Gastrocnemius medialis (tissue), 4 donors: ENCODE measurements at regions of chr5 and their contacts with region 1.

Region 1: GRCh38 chr5:39424736-39425637 is at the start of gene DAB2:
- DNase-seq: peak; percentile 59 to 76
- ATAC-seq: peak; percentile 64 to 77
- H3K4me3 ChIP-seq: peak within 1 kb of the TSS; percentile 52 to 71 (median 64)
- H3K27ac ChIP-seq: peak within 1 kb of the TSS; percentile 75 to 83 (median 82)
- H3K4me1 ChIP-seq: peaks cover 32 to 38% of the 10 kb centered on the region in 2 donors
- H3K27me3 ChIP-seq: peaks cover 0 to 14% (median 3%) of the 10 kb centered on the region in 3 donors
- CTCF ChIP-seq: peak; percentile 5 to 51 (median 34)
- POLR2A ChIP-seq: peak; percentile 50 to 74
- total RNA-seq, gene DAB2: 7.2 to 18.5 (median 16.3) TPM

Region 2: GRCh38 chr5:39256477-39257235 is 168.3 kb before region 1 on chr5:
- in situ Hi-C with region 1: no loop called
- intact Hi-C with region 1: no loop called
- DNase-seq: no peak
- ATAC-seq: no peak
- H3K4me3 ChIP-seq: no peak overlapping the region
- H3K27ac ChIP-seq: no peak overlapping the region
- H3K4me1 ChIP-seq: no peaks in the 10 kb centered on the region
- H3K27me3 ChIP-seq: no peaks in the 10 kb centered on the region
- CTCF ChIP-seq: no peak
- POLR2A ChIP-seq: no peak

Region 3: GRCh38 chr5:39379693-39380092 is 45.3 kb before region 1 on chr5:
- in situ Hi-C with region 1: no loop called
- intact Hi-C with region 1: no loop called
- DNase-seq: no peak
- ATAC-seq: no peak
- H3K4me3 ChIP-seq: no peak overlapping the region
- H3K27ac ChIP-seq: no peak overlapping the region
- H3K4me1 ChIP-seq: no peaks in the 10 kb centered on the region
- H3K27me3 ChIP-seq: no peaks in the 10 kb centered on the region
- CTCF ChIP-seq: no peak
- POLR2A ChIP-seq: no peak

Region 4: DNA sequence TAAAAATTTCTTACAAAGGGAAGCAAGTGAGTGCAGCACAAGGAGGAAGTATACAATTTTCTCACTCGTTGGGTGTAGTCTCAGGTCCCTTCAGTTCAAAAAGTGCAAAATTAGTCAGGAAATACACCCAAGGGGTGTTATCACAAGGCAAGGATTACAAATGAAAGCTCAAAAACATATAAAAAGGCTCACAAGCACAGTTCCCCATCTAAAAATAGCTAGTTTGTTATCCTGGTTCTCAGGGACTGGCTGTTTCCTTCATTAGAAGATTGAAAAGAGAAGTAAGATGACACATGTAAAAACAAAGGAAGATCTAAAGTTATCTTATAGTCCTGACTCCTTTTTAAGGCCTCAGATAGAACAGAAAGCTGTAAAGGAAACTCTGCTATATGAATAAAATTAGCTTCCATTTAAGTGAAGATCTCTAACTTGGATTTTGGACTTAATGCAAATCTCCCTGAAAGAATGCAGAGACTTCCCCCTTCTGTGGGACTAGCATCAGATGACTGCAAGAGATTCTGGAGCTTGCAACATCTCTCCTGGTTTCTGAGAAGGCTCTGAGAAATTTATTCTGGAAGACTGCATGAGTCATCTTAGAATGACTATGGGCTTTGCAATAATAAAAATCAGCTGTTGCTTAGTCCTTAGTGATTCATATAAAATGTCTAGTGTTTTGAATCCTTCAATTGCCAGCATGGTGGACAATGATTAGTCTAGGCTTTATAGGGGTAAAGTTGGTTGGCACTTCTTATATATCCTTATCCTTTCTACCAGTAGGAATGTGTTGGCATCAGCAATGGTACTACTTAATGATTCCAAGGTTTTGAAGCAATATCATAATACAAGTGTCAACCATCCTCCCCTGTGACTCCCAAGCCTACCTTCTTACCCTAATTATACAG is 25.6 kb before region 1 on chr5:
- in situ Hi-C with region 1: no loop called
- intact Hi-C with region 1: no loop called
- DNase-seq: peak; percentile 21 to 41
- ATAC-seq: peak; percentile 93
- H3K4me3 ChIP-seq: no peak overlapping the region
- H3K27ac ChIP-seq: peak overlapping the region; percentile 69 to 75 (median 72)
- H3K4me1 ChIP-seq: peaks cover 0 to 14% of the 10 kb centered on the region in 2 donors
- H3K27me3 ChIP-seq: no peaks in the 10 kb centered on the region
- CTCF ChIP-seq: no peak
- POLR2A ChIP-seq: peak in 1 of 2 donors; percentile 34

Region 5: DNA sequence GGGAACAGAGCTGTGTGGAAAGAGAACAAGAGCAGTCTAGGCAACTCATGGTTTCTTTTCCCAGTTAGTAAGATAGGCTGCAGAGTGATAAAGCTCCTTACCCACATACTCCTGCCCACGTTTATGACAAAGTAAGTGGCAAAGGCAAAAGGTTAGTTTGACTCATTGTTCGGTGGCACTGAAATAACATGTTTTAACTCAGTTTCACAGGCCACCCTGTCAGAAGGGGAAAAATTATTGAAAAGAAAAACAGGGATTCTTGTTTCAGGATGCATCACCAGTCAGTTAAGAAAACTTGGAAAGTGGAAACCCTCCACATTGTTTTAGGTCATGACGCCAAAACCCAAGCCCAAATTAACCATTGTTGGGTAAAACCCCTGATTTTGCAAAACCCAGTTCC is 22.1 kb after region 1 on chr5:
- in situ Hi-C with region 1: no loop called
- intact Hi-C with region 1: no loop called
- DNase-seq: no peak
- ATAC-seq: no peak
- H3K4me3 ChIP-seq: no peak overlapping the region
- H3K27ac ChIP-seq: no peak overlapping the region
- H3K4me1 ChIP-seq: no peaks in the 10 kb centered on the region
- H3K27me3 ChIP-seq: no peaks in the 10 kb centered on the region
- CTCF ChIP-seq: no peak
- POLR2A ChIP-seq: no peak

Region 6: DNA sequence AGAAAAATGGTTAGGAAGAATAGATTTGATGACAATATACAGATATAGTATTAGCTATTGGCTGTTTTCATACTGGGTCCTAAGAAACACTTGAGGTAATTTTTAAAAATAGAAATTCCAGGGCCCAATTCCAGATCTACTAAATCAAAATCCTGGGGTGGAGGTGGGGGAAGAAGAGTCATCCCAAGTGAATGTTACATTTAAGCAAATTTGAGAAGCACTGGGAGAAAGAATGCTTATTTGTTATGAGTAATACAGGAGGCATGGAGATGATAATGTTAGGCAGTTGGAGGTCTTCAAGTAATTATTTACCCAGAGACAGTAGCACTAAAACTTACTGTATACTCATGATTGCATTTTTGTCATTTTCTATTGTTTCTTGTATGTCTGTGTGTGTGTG is 92.8 kb after region 1 on chr5:
- in situ Hi-C with region 1: no loop called
- intact Hi-C with region 1: loop called (anchors 5 kb)
- DNase-seq: no peak
- ATAC-seq: no peak
- H3K4me3 ChIP-seq: no peak overlapping the region
- H3K27ac ChIP-seq: no peak overlapping the region
- H3K4me1 ChIP-seq: peaks cover 8 to 15% of the 10 kb centered on the region in 2 donors
- H3K27me3 ChIP-seq: no peaks in the 10 kb centered on the region
- CTCF ChIP-seq: no peak
- POLR2A ChIP-seq: no peak